ENCODE measurements at regions of chr2 and their contacts with region 1.

Region 1: DNA sequence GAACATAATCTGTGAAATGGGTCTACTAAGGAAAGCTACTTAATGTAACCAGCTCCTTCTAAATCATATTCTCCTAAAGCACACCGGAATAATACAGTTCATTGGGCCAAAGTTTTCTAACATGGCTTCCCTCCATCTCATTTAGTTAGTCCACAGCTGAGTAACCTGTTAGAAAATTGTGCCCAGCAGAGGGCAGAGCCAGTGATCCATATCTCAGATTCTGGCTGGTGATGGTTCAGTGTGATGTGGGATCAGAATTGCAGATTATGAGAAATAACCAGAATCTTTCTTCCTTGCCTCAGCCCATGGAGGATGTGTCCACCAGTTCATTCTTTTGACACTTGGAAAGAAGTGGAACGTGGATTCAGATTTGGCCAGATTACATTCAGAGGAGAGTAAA is 9.4 kb upstream of the CTLA4 start:
- DNase-seq: peak; percentile 66
- H3K4me3 Mint-ChIP-seq: peak overlapping the region; percentile 25
- H3K27ac Mint-ChIP-seq: peak overlapping the region; percentile 81
- H3K4me1 Mint-ChIP-seq: peaks cover 84% of the 10 kb centered on the region
- H3K27me3 Mint-ChIP-seq: no peaks in the 10 kb centered on the region

Region 2: GRCh38 chr2:203820969-203821368 is 37.2 kb before region 1 on chr2:
- CTCF ChIA-PET with region 1: interaction called, 12 read pairs
- POLR2A ChIA-PET with region 1: interaction called, 7 read pairs
- intact Hi-C with region 1: loop called (anchors 5 kb)
- DNase-seq: no peak
- H3K4me3 Mint-ChIP-seq: no peak overlapping the region
- H3K27ac Mint-ChIP-seq: no peak overlapping the region
- H3K4me1 Mint-ChIP-seq: peaks cover 36% of the 10 kb centered on the region
- H3K27me3 Mint-ChIP-seq: no peaks in the 10 kb centered on the region

Region 3: GRCh38 chr2:203887677-203888076 is 29.5 kb after region 1 on chr2:
- CTCF ChIA-PET with region 1: interaction called, 6 read pairs
- POLR2A ChIA-PET with region 1: interaction called, 29 read pairs
- intact Hi-C with region 1: loop called (anchors 1 kb)
- DNase-seq: no peak
- H3K4me3 Mint-ChIP-seq: no peak overlapping the region
- H3K27ac Mint-ChIP-seq: peak overlapping the region; percentile 90
- H3K4me1 Mint-ChIP-seq: peaks cover 84% of the 10 kb centered on the region
- H3K27me3 Mint-ChIP-seq: peaks cover 2% of the 10 kb centered on the region

Region 4: GRCh38 chr2:203893401-203893800 is 35.2 kb after region 1 on chr2:
- CTCF ChIA-PET with region 1: interaction called, 3 read pairs
- POLR2A ChIA-PET with region 1: interaction called, 19 read pairs
- intact Hi-C with region 1: loop called (anchors 1 kb)
- DNase-seq: no peak
- H3K4me3 Mint-ChIP-seq: peak overlapping the region; percentile 14
- H3K27ac Mint-ChIP-seq: peak overlapping the region; percentile 84
- H3K4me1 Mint-ChIP-seq: peaks cover 77% of the 10 kb centered on the region
- H3K27me3 Mint-ChIP-seq: no peaks in the 10 kb centered on the region